Gastrocnemius medialis (tissue), 4 donors: ENCODE measurements at regions of chr17 and their contacts with region 1.

Region 1: DNA sequence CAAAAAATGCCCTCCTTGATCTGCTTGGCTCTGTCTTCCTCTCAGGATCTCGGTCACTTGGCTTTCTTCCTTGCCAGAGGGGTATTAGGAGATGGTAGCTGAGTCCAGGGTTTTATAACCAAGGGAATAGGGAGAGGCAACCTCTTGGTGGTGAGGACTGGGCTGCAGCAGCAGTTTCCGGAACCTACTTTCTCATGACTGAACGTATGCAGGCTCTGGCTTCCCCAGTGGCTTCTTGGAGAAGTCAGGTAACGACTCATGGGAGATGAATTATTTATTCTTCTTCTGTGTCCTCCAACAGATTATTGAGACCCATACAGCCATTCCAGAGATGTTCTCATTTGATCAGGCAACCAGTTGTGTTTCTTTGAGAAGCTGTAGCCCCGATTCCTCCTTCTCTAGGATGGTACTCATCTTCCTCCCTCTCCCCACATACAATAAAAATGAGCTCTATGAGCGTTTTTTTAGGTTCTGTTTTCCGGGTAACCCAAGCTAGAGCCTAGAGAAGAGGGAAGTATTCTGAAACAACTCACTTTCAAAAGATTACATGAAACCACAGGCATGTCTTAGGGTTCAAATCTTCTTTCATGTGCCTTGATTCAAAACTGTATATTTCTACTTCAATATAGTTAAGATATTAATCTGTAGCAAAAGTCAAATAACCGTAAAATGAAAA is 22.3 kb upstream of the DHX40 start:
- DNase-seq: no peak
- ATAC-seq: no peak
- H3K4me3 ChIP-seq: no peak overlapping the region
- H3K27ac ChIP-seq: no peak overlapping the region
- H3K4me1 ChIP-seq: no peaks in the 10 kb centered on the region
- H3K27me3 ChIP-seq: no peaks in the 10 kb centered on the region
- CTCF ChIP-seq: no peak
- POLR2A ChIP-seq: no peak

Region 2: GRCh38 chr17:59876107-59876506 is 333.0 kb after region 1 on chr17:
- in situ Hi-C with region 1: no loop called
- intact Hi-C with region 1: no loop called
- DNase-seq: no peak
- ATAC-seq: no peak
- H3K4me3 ChIP-seq: no peak overlapping the region
- H3K27ac ChIP-seq: no peak overlapping the region
- H3K4me1 ChIP-seq: no peaks in the 10 kb centered on the region
- H3K27me3 ChIP-seq: no peaks in the 10 kb centered on the region
- CTCF ChIP-seq: no peak
- POLR2A ChIP-seq: no peak

Region 3: GRCh38 chr17:60059082-60059481 is 516.0 kb after region 1 on chr17:
- in situ Hi-C with region 1: no loop called
- intact Hi-C with region 1: loop called (anchors 5 kb)
- DNase-seq: no peak
- ATAC-seq: no peak
- H3K4me3 ChIP-seq: no peak overlapping the region
- H3K27ac ChIP-seq: no peak overlapping the region
- H3K4me1 ChIP-seq: no peaks in the 10 kb centered on the region
- H3K27me3 ChIP-seq: no peaks in the 10 kb centered on the region
- CTCF ChIP-seq: no peak
- POLR2A ChIP-seq: no peak